Naive thymus-derived CD8-positive, alpha-beta T cell (primary cell): ENCODE measurements at regions of chr6 and their contacts with region 1.

Region 1: GRCh38 chr6:151451950-151452749 is at the start of gene RMND1:
- DNase-seq: peak; percentile 96 to 100 (median 99)
- ATAC-seq: peak; percentile 94 to 96
- H3K4me3 Mint-ChIP-seq: peak within 1 kb of the TSS; percentile 85 to 99 (median 97)
- H3K27ac Mint-ChIP-seq: peak within 1 kb of the TSS; percentile 88 to 96 (median 94)
- H3K4me1 Mint-ChIP-seq: peaks cover 25 to 60% (median 56%) of the 10 kb centered on the region in 4 donors
- H3K27me3 Mint-ChIP-seq: no peaks in the 10 kb centered on the region
- polyA plus RNA-seq, gene RMND1: 7.7 to 13.9 (median 10.7) TPM

Region 2: DNA sequence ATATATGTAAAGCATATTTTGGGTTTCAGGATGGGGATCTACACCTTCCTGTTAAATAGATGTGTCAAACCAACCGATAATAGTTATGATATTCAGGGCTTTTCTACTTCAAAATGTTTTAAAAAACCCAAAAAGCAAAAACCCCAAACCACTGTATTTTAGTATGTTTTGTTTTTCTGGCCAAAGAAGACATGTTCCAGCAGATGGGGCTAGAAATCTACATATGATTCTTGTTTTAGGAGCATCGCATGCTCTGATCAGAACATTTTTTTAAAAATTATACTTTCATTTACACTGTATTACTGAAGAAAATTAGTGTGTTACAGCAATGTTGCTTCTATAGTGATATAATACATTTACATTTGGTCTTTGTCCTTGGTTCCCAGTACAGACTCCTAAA is 11.2 kb before region 1 on chr6:
- POLR2A ChIA-PET with region 1: interaction called, 10 read pairs
- DNase-seq: peak in 3 of 10 donors; percentile 20 to 43 (median 39)
- ATAC-seq: peak in 1 of 2 donors; percentile 46
- H3K4me3 Mint-ChIP-seq: no peak overlapping the region
- H3K27ac Mint-ChIP-seq: peak overlapping the region in 3 of 10 donors; percentile 6 to 22 (median 7)
- H3K4me1 Mint-ChIP-seq: peaks cover 12 to 60% (median 39%) of the 10 kb centered on the region in 4 donors
- H3K27me3 Mint-ChIP-seq: no peaks in the 10 kb centered on the region